GM18951 (cell line): ENCODE measurements at regions of chr5 and their contacts with region 1.

Region 1: GRCh38 chr5:140259500-140259899 is 43.4 kb downstream of the PFDN1 start:
- POLR2A ChIP-seq: no peak

Region 2: DNA sequence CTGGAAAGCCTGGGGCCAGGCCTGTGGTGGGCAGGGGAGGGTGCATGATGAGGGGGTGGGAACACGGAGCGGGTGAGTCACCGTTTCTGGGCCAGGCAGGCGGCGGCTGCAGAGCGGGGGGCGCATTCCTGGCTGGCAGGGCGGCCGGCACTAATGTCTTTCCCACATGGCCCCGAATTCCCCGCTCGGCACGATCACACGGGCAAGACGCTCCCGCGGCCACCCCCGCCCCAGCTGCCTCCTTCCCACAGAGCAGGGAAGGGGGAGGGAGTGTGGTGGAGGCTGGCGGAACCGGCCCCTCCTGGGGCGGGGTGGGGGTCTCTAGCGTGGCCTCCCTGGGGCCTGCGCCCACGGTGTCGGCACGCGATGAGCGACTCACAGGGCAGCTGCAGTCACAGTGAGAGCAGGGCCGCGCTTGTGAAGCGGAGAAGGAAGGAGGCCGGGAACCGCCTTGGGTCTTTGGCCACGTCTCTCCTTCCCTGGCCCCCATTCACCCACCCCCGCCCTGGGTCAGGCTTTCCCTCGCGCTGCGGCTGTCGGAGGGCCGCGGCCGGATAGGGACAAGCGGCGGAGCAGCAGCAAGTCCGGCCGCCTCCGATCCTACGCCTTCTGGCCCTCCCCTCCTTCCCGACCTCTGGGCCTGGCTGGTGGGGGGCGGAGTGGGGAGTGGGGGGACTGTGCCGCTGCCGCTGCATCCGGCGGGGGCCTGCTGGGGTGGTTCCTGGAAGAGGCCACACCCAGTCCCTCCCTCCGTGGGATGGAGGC is 562.4 kb before region 1 on chr5:
- in situ Hi-C with region 1: no loop called
- POLR2A ChIP-seq: peak; percentile 20

Region 3: GRCh38 chr5:140329739-140330481 is 70.4 kb after region 1 on chr5:
- in situ Hi-C with region 1: loop called (anchors 5 kb)
- POLR2A ChIP-seq: no peak

Region 4: GRCh38 chr5:140564196-140565023 is 304.9 kb after region 1 on chr5 and contains the starts of genes APBB3 and SLC35A4:
- in situ Hi-C with region 1: no loop called
- POLR2A ChIP-seq: peak; percentile 92

Region 5: DNA sequence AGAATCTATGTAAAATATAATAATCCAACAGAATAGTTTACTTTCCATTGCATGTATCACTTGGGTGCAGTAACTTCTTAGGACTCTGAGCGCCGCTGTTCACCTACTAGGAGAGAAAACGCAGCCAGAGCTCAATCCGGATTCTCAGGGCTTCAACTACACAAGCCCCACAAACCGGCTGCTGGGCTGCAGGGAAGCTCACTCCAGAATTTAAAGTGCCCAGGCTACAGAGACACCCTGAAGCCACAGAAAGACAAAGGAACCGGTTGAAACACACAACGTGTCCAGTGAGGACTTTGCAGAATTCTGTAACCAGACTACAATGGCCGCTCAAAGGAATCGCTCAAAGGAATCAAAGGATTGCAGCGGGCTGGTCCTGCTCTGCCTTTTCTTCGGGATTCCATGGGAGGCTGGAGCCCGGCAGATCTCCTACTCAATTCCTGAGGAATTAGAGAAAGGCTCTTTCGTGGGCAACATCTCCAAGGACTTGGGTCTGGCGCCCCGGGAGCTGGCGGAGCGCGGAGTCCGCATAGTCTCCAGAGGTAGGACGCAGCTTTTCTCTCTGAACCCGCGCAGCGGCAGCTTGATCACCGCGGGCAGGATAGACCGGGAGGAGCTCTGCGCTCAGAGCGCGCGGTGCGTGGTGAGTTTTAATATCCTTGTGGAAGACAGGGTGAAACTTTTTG is 1153.5 kb after region 1 on chr5 and contains the start of gene PCDHGA10:
- in situ Hi-C with region 1: no loop called
- POLR2A ChIP-seq: no peak